ENCODE measurements at regions of chr19 and their contacts with region 1.

Region 1: DNA sequence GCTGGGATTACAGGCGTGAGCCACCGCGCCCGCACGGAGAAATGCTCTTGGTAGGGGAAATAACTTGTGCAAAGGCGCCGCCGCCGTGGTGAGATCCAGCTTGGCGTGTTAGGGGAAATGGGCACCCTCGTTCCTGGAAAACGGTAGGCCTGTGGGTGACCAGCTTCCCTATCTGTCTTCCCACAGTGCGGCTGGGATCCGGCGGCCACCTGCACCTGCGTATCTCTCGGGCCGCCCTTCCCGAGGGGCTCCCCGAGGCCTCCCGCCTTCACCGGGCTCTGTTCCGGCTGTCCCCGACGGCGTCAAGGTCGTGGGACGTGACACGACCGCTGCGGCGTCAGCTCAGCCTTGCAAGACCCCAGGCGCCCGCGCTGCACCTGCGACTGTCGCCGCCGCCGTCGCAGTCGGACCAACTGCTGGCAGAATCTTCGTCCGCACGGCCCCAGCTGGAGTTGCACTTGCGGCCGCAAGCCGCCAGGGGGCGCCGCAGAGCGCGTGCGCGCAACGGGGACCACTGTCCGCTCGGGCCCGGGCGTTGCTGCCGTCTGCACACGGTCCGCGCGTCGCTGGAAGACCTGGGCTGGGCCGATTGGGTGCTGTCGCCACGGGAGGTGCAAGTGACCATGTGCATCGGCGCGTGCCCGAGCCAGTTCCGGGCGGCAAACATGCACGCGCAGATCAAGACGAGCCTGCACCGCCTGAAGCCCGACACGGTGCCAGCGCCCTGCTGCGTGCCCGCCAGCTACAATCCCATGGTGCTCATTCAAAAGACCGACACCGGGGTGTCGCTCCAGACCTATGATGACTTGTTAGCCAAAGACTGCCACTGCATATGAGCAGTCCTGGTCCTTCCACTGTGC is 2.4 kb downstream of the GDF15 start:
- DNase-seq: peak; percentile 81
- H3K4me3 Mint-ChIP-seq: peak overlapping the region; percentile 44
- H3K27ac Mint-ChIP-seq: no peak overlapping the region
- H3K4me1 Mint-ChIP-seq: peaks cover 17% of the 10 kb centered on the region
- H3K27me3 Mint-ChIP-seq: peaks cover 54% of the 10 kb centered on the region

Region 2: GRCh38 chr19:18239303-18239702 is 149.0 kb before region 1 on chr19:
- CTCF ChIA-PET with region 1: interaction called, 10 read pairs
- POLR2A ChIA-PET with region 1: no interaction called
- DNase-seq: no peak
- H3K4me3 Mint-ChIP-seq: no peak overlapping the region
- H3K27ac Mint-ChIP-seq: no peak overlapping the region
- H3K4me1 Mint-ChIP-seq: no peaks in the 10 kb centered on the region
- H3K27me3 Mint-ChIP-seq: peaks cover 14% of the 10 kb centered on the region

Region 3: DNA sequence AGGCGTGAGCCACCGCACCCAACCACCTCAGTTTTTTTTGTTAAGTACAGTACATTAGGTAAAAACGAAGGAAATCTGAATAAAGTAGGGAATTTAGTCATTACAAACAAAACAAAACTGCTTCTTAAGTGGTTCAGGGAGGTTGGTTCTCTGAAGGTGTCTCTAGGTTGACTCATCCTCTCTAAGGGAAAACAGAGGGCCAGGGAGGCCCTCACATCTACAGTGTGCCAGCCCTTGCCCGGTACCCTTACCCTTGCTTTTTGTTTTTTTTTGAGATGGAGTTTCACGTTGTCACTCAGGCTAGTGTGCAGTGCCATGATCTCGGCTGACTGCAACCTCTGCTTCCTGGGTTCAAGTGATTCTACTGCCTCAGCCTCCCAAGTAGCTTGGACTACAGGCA is 89.7 kb before region 1 on chr19:
- CTCF ChIA-PET with region 1: no interaction called
- POLR2A ChIA-PET with region 1: no interaction called
- DNase-seq: no peak
- H3K4me3 Mint-ChIP-seq: no peak overlapping the region
- H3K27ac Mint-ChIP-seq: peak overlapping the region; percentile 71
- H3K4me1 Mint-ChIP-seq: peaks cover 69% of the 10 kb centered on the region
- H3K27me3 Mint-ChIP-seq: no peaks in the 10 kb centered on the region

Region 4: GRCh38 chr19:18419195-18419698 is 30.9 kb after region 1 on chr19 and contains the start of gene SSBP4:
- CTCF ChIA-PET with region 1: interaction called, 58 read pairs
- POLR2A ChIA-PET with region 1: interaction called, 12 read pairs
- DNase-seq: peak; percentile 79
- H3K4me3 Mint-ChIP-seq: peak within 1 kb of the TSS; percentile 94
- H3K27ac Mint-ChIP-seq: peak within 1 kb of the TSS; percentile 91
- H3K4me1 Mint-ChIP-seq: peaks cover 84% of the 10 kb centered on the region
- H3K27me3 Mint-ChIP-seq: peaks cover 11% of the 10 kb centered on the region
- total RNA-seq, gene SSBP4: 140 to 153 TPM

Region 5: GRCh38 chr19:18435178-18435841 is 47.0 kb after region 1 on chr19:
- CTCF ChIA-PET with region 1: no interaction called
- POLR2A ChIA-PET with region 1: no interaction called
- DNase-seq: no peak
- H3K4me3 Mint-ChIP-seq: no peak overlapping the region
- H3K27ac Mint-ChIP-seq: no peak overlapping the region
- H3K4me1 Mint-ChIP-seq: peaks cover 30% of the 10 kb centered on the region
- H3K27me3 Mint-ChIP-seq: no peaks in the 10 kb centered on the region